ENCODE measurements at regions of chr1 and their contacts with region 1.

Region 1: GRCh38 chr1:165424454-165425216 is 20.3 kb downstream of the RXRG start:
- DNase-seq: no peak
- ATAC-seq: peak; percentile 54
- H3K4me3 ChIP-seq: no peak overlapping the region
- H3K27ac ChIP-seq: no peak overlapping the region
- H3K4me1 ChIP-seq: peaks cover 5% of the 10 kb centered on the region
- H3K27me3 ChIP-seq: peaks cover 0 to 4% of the 10 kb centered on the region in 2 experiments; a peak in 1 of 4 replicates
- CTCF ChIP-seq: no peak
- EP300 ChIP-seq: no peak
- POLR2A ChIP-seq: no peak
- RAD21 ChIP-seq: no peak

Region 2: GRCh38 chr1:165376041-165376810 is 48.4 kb before region 1 on chr1:
- CTCF ChIA-PET with region 1: no interaction called
- POLR2A ChIA-PET with region 1: no interaction called
- RAD21 ChIA-PET with region 1: no interaction called
- SMC1A ChIA-PET with region 1: no interaction called
- in situ Hi-C with region 1: no loop called
- intact Hi-C with region 1: loop called (anchors 5 kb)
- DNase-seq: no peak
- ATAC-seq: peak; percentile 67
- H3K4me3 ChIP-seq: peak overlapping the region; percentile 6; the same call in 1 of the 2 replicates
- H3K27ac ChIP-seq: no peak overlapping the region
- H3K4me1 ChIP-seq: peaks cover 4% of the 10 kb centered on the region; the same call in 1 of the 2 replicates
- H3K27me3 ChIP-seq: peaks cover 2% of the 10 kb centered on the region in 2 experiments; a peak in 3 of 4 replicates
- CTCF ChIP-seq: no peak
- EP300 ChIP-seq: no peak
- POLR2A ChIP-seq: no peak
- RAD21 ChIP-seq: no peak

Region 3: DNA sequence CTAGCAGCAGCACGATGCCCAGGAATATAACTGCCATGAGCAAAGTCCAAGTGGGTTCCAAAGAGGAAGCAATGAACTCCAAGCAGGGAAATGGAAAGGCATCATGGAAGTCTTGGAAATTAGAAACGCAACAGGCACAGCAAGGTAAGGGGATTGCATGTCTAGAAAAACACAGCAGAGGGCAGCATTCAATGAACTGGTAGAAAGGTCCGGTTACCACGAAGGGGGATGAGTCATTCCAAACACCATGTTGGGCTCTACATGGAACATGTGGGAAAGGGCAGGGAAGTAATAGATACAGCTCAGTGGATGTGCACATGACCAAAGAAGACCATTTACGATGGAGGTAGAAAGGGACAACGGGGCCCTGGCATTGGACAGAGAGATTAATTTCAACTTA is 16.1 kb before region 1 on chr1:
- CTCF ChIA-PET with region 1: no interaction called
- POLR2A ChIA-PET with region 1: no interaction called
- RAD21 ChIA-PET with region 1: no interaction called
- SMC1A ChIA-PET with region 1: no interaction called
- in situ Hi-C with region 1: no loop called
- intact Hi-C with region 1: no loop called
- DNase-seq: no peak
- ATAC-seq: peak; percentile 63; the same call in 2 of the 3 replicates
- H3K4me3 ChIP-seq: no peak overlapping the region
- H3K27ac ChIP-seq: no peak overlapping the region
- H3K4me1 ChIP-seq: no peaks in the 10 kb centered on the region
- H3K27me3 ChIP-seq: peaks cover 0 to 2% of the 10 kb centered on the region in 2 experiments; a peak in 2 of 4 replicates
- CTCF ChIP-seq: peak; percentile 34 to 45 (median 41); a peak in 4 of 6 replicates
- EP300 ChIP-seq: no peak
- POLR2A ChIP-seq: no peak
- RAD21 ChIP-seq: no peak

Region 4: GRCh38 chr1:165467706-165468105 is 43.1 kb after region 1 on chr1:
- CTCF ChIA-PET with region 1: no interaction called
- POLR2A ChIA-PET with region 1: no interaction called
- RAD21 ChIA-PET with region 1: no interaction called
- SMC1A ChIA-PET with region 1: no interaction called
- in situ Hi-C with region 1: no loop called
- intact Hi-C with region 1: no loop called
- DNase-seq: no peak
- ATAC-seq: no peak
- H3K4me3 ChIP-seq: no peak overlapping the region
- H3K27ac ChIP-seq: no peak overlapping the region
- H3K4me1 ChIP-seq: no peaks in the 10 kb centered on the region
- H3K27me3 ChIP-seq: peaks cover 2 to 3% of the 10 kb centered on the region in 2 experiments; a peak in 3 of 4 replicates
- CTCF ChIP-seq: no peak
- EP300 ChIP-seq: no peak
- POLR2A ChIP-seq: no peak
- RAD21 ChIP-seq: no peak

Region 5: DNA sequence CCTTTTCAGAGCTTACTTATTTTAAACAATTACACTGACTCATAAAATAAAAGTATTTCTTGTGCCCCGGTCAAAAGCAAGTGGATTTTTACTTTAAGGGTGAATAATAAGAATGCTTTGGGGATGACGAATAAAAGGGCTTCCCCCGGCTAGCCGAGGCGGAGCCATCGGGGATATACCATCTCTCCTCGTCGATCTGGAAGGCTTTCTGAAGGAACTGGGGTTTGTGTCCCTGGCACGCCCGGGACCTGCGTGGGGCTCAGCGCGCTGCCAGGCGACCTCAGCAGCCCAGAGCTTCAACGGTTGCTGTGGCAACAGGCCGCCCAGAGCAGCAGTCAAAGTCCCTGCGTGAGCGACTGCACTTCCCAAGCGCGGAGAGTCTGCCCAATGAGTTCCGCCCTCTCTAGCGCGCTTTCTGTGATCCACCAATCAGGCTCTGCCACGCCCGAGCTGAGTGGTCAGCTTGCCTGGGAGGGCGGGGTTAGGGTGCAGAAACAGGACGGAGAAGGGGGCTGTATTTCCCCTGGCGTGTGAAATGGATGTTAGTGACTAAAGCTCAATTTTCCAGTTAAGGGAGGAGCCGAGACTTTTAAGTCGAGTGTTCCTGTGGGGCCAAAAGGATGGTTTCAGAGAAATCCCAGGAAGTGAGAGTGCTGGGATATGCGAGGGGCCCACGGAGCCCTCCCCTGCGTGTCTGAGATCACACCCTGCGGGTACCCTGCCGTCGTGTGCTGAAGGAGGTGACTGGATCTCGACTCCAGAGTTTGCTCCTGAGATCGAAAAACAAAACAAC is 173.4 kb after region 1 on chr1:
- CTCF ChIA-PET with region 1: no interaction called
- POLR2A ChIA-PET with region 1: no interaction called
- RAD21 ChIA-PET with region 1: no interaction called
- SMC1A ChIA-PET with region 1: no interaction called
- in situ Hi-C with region 1: no loop called
- intact Hi-C with region 1: no loop called
- DNase-seq: peak; percentile 90
- ATAC-seq: peak; percentile 98
- H3K4me3 ChIP-seq: peak overlapping the region; percentile 70
- H3K27ac ChIP-seq: peak overlapping the region; percentile 71
- H3K4me1 ChIP-seq: peaks cover 14% of the 10 kb centered on the region
- H3K27me3 ChIP-seq: peaks cover 0 to 8% of the 10 kb centered on the region in 2 experiments; a peak in 1 of 4 replicates
- CTCF ChIP-seq: no peak
- EP300 ChIP-seq: no peak
- POLR2A ChIP-seq: peak; percentile 40; the same call in 1 of the 2 replicates
- RAD21 ChIP-seq: no peak

Measured in GM12878 (cell line).